ENCODE measurements at regions of chr5 and their contacts with region 1.

Region 1: GRCh38 chr5:180494060-180494509 is at the start of gene CNOT6:
- DNase-seq: peak; percentile 95 to 98
- ATAC-seq: peak; percentile 100
- H3K4me3 ChIP-seq: peak within 1 kb of the TSS; percentile 88 to 95
- H3K27ac ChIP-seq: peak within 1 kb of the TSS; percentile 18 to 94
- H3K4me1 ChIP-seq: peaks cover 2 to 4% of the 10 kb centered on the region in 2 donors
- H3K27me3 ChIP-seq: no peaks in the 10 kb centered on the region
- total RNA-seq, gene CNOT6: 16.4 to 17.6 TPM

Region 2: GRCh38 chr5:180353048-180353979 is 140.8 kb before region 1 on chr5 and contains the start of gene GFPT2:
- intact Hi-C with region 1: loop called in 1 of 2 experiments (anchors 5 kb)
- DNase-seq: peak; percentile 89 to 94
- ATAC-seq: peak; percentile 96
- H3K4me3 ChIP-seq: peak within 1 kb of the TSS; percentile 66 to 85
- H3K27ac ChIP-seq: no peak within 1 kb of the TSS
- H3K4me1 ChIP-seq: no peaks in the 10 kb centered on the region
- H3K27me3 ChIP-seq: no peaks in the 10 kb centered on the region
- total RNA-seq, gene GFPT2: 60.1 to 60.2 TPM

Region 3: DNA sequence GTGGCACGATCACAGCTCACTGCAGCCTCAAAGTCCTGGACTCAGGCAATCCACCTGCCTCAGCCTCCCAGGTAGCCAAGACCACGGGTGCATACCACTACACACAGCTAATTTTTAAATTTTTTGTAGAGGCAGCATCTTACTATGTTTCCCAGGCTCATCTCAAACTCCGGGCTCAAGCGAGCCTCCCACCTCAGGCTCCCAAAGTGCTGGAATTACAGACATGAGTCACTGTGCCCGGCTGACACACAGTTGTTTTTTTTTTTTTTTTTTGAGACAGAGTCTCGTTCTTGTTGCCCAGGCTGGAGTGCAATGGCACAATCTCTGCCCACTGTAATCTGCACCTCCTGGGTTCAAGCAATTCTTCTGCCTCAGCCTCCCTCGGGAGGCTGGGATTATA is 70.0 kb before region 1 on chr5:
- intact Hi-C with region 1: no loop called
- DNase-seq: peak in 1 of 2 donors; percentile 24
- ATAC-seq: no peak
- H3K4me3 ChIP-seq: no peak overlapping the region
- H3K27ac ChIP-seq: no peak overlapping the region
- H3K4me1 ChIP-seq: no peaks in the 10 kb centered on the region
- H3K27me3 ChIP-seq: no peaks in the 10 kb centered on the region

Measured in aorta (tissue), 5 donors.